IMR-90 (cell line): ENCODE measurements at regions of chr11 and their contacts with region 1.

Region 1: DNA sequence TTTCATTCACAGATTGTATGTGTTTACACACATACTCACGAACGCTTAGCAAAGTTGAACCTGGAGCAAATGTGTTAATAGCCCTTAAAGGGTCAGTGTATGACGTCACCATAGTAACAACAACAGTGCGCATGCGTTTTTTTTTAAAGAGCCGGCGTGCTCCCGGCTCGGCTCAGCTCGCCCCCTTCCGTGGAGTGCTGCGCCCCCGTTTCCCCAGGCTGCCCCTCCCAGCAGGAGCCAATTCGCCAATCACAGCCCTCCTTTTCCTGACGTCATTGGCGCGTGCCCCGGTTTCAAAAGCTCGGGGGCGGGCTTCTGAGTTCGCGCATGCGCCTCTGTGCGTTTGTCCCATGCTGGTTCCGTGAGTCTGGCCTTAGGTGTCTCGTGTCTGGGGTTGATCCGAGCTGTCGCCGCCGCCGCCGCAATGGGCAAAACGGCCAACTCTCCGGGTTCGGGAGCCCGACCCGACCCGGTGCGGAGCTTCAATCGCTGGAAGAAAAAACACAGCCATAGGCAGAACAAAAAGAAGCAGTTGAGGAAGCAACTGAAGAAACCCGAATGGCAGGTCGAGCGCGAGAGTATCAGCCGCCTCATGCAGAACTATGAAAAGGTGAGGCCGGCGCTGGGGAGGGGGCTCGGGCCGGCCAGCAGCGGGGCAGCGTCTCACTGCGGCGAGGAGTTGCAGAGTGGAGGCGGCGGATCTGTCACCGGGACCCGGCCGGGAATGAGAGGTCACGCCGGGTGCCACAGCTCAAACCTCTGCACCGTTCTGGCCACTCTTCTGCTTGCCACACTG is at the start of gene DDX10:
- DNase-seq: peak; percentile 98
- ATAC-seq: peak; percentile 100
- H3K4me3 ChIP-seq: peak within 1 kb of the TSS; percentile 64
- H3K27ac ChIP-seq: peak within 1 kb of the TSS; percentile 24; the same call in 1 of the 2 replicates
- H3K4me1 ChIP-seq: peaks cover 5% of the 10 kb centered on the region
- H3K27me3 ChIP-seq: no peaks in the 10 kb centered on the region
- CTCF ChIP-seq: 0 out of 2 replicates have a peak, but pooled peaks have one; percentile 15
- POLR2A ChIP-seq: no peak
- RAD21 ChIP-seq: no peak
- total RNA-seq, gene DDX10: 28.1 and 31.9 TPM in 2 replicates

Region 2: DNA sequence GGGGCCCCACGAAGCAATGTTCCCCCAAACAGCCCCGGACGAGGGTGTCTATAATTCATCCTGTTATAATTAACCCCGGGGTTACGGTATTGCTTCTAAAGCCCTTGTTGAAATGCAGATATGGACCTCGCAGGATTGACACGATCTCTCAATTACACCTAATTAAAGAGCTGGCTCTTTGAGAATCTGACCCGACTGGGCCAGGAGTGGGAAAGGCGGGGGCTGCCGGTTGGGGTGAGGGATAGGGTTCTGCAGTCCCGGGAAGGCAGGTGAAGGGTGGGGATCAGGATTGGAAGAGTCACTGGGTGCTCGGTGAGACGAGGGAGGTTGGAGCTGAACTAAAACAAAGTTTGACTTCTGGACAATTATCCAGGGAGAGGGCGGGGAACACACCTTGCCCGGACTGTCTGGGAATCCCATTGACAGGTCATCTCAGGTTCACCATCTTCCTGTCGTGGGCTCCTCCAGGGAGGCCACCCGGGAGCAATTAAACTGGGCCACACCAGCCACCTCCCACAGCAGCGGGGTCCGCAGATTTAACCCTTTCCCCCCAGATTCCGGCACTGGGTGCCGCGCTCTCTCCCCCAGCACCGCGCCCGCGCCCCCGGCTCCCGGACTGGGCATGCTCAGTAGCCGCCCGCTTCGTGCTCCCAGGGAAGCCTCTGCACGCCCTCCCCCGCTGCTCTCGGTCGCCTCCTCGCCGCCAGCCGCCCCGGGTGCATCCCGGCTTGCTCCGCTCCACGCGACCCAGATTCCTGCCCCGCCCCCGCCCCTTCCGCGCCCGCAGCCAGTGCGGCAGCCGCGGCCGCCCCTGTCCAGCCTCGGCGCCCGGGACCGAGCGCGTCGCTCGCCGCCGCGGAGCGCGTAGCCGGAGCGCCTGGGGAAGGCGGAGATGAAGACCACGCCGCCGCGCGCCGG is 1074.2 kb before region 1 on chr11 and contains the start of gene ELMOD1:
- CTCF ChIA-PET with region 1: no interaction called
- POLR2A ChIA-PET with region 1: no interaction called
- dilution Hi-C with region 1: no loop called
- in situ Hi-C with region 1: loop called (anchors 25 kb)
- intact Hi-C with region 1: no loop called
- DNase-seq: peak; percentile 23
- ATAC-seq: peak; percentile 87
- H3K4me3 ChIP-seq: peak within 1 kb of the TSS; percentile 89
- H3K27ac ChIP-seq: no peak within 1 kb of the TSS
- H3K4me1 ChIP-seq: peaks cover 6% of the 10 kb centered on the region
- H3K27me3 ChIP-seq: peaks cover 37% of the 10 kb centered on the region
- CTCF ChIP-seq: 0 out of 2 replicates have a peak, but pooled peaks have one; percentile 21
- POLR2A ChIP-seq: no peak
- RAD21 ChIP-seq: no peak
- total RNA-seq, gene ELMOD1: 0.18 and 0.28 TPM in 2 replicates

Region 3: DNA sequence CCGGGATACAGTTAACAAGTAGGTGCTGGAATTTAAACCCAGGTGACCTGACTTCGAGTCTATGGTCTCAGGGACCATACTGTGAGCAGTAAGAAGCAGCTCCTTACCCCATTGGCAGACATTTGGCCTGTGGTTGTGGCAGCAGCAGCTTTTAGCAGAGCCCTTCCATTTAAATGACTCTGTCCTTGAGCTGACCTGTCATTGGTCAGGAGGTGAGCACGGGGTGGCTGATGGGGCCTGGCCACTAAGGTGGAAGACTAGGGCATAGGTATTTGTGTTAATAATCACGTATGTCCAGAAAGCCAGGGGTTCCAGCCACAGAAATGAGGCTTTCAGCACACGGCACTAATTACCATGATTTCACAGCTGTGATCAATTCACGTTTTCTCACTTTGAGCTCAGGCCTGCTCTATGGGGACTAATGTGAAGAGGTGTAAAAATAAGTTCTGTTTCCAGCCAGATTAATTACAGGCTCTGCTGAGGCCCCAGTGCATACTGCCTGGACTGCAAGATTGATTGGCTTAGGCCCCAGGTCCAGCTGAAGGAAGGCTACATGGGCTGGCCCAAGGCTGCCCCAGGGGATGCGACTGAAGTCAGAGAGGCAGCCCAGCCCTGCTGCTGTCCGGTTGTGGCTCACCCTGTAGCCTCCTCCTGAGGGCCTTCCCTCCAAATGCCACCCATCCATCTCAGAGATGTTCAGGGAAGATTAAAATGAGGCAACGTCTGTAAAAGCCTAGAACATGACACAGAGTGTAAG is 1840.8 kb after region 1 on chr11:
- CTCF ChIA-PET with region 1: no interaction called
- POLR2A ChIA-PET with region 1: no interaction called
- dilution Hi-C with region 1: no loop called
- in situ Hi-C with region 1: no loop called
- intact Hi-C with region 1: no loop called
- DNase-seq: no peak
- ATAC-seq: no peak
- H3K4me3 ChIP-seq: no peak overlapping the region
- H3K27ac ChIP-seq: no peak overlapping the region
- H3K4me1 ChIP-seq: peaks cover 2% of the 10 kb centered on the region; the same call in 1 of the 2 replicates
- H3K27me3 ChIP-seq: no peaks in the 10 kb centered on the region
- CTCF ChIP-seq: no peak
- POLR2A ChIP-seq: no peak
- RAD21 ChIP-seq: no peak